Gastrocnemius medialis (tissue), 4 donors: ENCODE measurements at regions of chr6 and their contacts with region 1.

Region 1: GRCh38 chr6:133432021-133432989 is 191.1 kb downstream of the EYA4 start:
- DNase-seq: peak; percentile 81 to 94
- ATAC-seq: peak; percentile 76 to 82
- H3K4me3 ChIP-seq: peak overlapping the region; percentile 5 to 23 (median 20)
- H3K27ac ChIP-seq: peak overlapping the region; percentile 85 to 89 (median 87)
- H3K4me1 ChIP-seq: peaks cover 52 to 65% of the 10 kb centered on the region in 2 donors
- H3K27me3 ChIP-seq: no peaks in the 10 kb centered on the region
- CTCF ChIP-seq: peak in 1 of 5 experiments; percentile 12
- POLR2A ChIP-seq: no peak

Region 2: GRCh38 chr6:133360194-133360593 is 72.1 kb before region 1 on chr6:
- in situ Hi-C with region 1: no loop called
- intact Hi-C with region 1: loop called (anchors 5 kb)
- DNase-seq: no peak
- ATAC-seq: peak; percentile 88 to 91
- H3K4me3 ChIP-seq: peak overlapping the region; percentile 8 to 42 (median 28)
- H3K27ac ChIP-seq: peak overlapping the region; percentile 82 to 90 (median 90)
- H3K4me1 ChIP-seq: peaks cover 55 to 61% of the 10 kb centered on the region in 2 donors
- H3K27me3 ChIP-seq: no peaks in the 10 kb centered on the region
- CTCF ChIP-seq: no peak
- POLR2A ChIP-seq: no peak

Region 3: DNA sequence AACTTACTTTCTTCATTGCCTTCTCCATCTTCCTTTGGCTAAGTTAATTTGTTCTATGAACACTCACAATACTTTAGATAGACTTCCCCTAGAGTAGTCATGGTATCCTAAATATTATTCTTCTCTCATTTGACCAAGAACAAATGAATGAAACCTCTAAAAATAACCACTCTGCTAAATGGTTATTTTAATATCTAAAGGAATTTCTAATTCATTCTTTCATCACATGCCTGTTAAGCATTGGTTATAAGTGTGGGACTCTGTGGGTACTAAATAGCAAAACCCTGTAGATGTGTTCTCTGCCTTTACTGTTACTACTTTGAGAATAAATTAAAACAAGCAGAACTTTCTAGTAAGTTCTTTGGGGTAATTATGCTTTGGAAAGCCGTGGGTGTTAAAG is 52.3 kb before region 1 on chr6:
- in situ Hi-C with region 1: no loop called
- intact Hi-C with region 1: no loop called
- DNase-seq: no peak
- ATAC-seq: no peak
- H3K4me3 ChIP-seq: no peak overlapping the region
- H3K27ac ChIP-seq: no peak overlapping the region
- H3K4me1 ChIP-seq: peaks cover 32 to 39% of the 10 kb centered on the region in 2 donors
- H3K27me3 ChIP-seq: no peaks in the 10 kb centered on the region
- CTCF ChIP-seq: no peak
- POLR2A ChIP-seq: no peak

Region 4: DNA sequence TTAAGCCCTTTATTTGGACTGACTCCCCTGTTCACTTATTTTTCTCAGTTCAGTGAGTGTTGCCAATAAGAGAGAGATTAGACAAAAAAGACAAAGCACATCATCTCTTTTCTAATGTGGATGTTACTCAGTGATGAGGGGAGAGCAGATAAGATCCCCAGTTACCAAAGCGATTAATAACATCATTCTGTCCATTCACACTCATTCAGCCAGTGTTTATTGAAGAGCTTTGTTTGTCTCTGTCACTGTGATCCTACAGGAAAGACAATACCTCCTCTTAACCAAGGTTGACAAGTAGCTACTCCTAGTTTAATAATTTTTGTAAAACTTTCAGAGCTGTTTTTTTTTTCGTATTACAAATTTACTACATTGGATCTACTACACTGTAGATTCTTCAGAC is 28.2 kb before region 1 on chr6:
- in situ Hi-C with region 1: no loop called
- intact Hi-C with region 1: loop called (anchors 2 kb)
- DNase-seq: no peak
- ATAC-seq: peak; percentile 25 to 34
- H3K4me3 ChIP-seq: no peak overlapping the region
- H3K27ac ChIP-seq: peak overlapping the region; percentile 84 to 88 (median 86)
- H3K4me1 ChIP-seq: peaks cover 37 to 69% of the 10 kb centered on the region in 2 donors
- H3K27me3 ChIP-seq: no peaks in the 10 kb centered on the region
- CTCF ChIP-seq: no peak
- POLR2A ChIP-seq: no peak

Region 5: GRCh38 chr6:133787859-133788505 is 355.7 kb after region 1 on chr6:
- in situ Hi-C with region 1: no loop called
- intact Hi-C with region 1: no loop called
- DNase-seq: no peak
- ATAC-seq: no peak
- H3K4me3 ChIP-seq: no peak overlapping the region
- H3K27ac ChIP-seq: no peak overlapping the region
- H3K4me1 ChIP-seq: no peaks in the 10 kb centered on the region
- H3K27me3 ChIP-seq: no peaks in the 10 kb centered on the region
- CTCF ChIP-seq: no peak
- POLR2A ChIP-seq: no peak

Region 6: DNA sequence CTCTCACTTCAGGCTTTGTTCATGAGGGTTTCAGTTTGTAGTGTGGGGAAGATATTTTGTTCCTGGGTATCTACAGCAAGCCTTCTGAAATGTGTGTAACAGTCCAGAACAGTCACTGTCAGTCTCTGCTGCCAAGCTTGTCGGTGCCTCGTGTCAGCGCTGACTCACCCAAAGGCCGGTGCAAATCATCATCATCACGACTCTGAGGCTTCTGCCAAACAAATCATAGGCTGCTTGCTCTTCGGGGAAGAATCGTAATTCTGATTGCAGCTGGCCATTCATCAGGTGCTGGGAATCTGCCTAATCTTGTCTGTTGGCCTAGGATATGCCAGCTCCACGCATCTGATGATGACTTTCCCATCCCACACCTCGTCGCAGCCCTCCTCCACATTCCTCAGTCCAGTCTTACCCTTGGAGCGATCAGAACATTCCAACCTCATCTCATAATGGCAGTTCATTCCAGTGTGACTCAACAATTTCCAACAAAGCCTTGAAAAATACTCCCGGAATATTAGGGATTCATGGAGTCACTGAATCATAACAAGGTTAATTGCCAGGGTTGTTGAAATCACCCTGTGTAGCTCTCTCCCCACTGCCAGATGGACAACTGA is 1476.7 kb after region 1 on chr6:
- in situ Hi-C with region 1: no loop called
- intact Hi-C with region 1: loop called (anchors 10 kb)
- DNase-seq: peak; percentile 87
- ATAC-seq: peak; percentile 98
- H3K4me3 ChIP-seq: peak overlapping the region; percentile 13 to 34 (median 24)
- H3K27ac ChIP-seq: peak overlapping the region; percentile 80 to 87 (median 82)
- H3K4me1 ChIP-seq: peaks cover 4 to 16% of the 10 kb centered on the region in 2 donors
- H3K27me3 ChIP-seq: no peaks in the 10 kb centered on the region
- CTCF ChIP-seq: no peak
- POLR2A ChIP-seq: peak; percentile 52 to 58